Activated T-helper 2 cell treated with anti-CD3 and anti-CD28 coated beads, Interferon-gamma antibody, Interleukin-2, Interleukin-4, amounts not matched to agents 10 μg/mL and 5 μg/mL and 100 μg/mL, durations not matched to agents 14 hours and 24 hours and 36 hours (primary cell): ENCODE measurements at regions of chr10 and their contacts with region 1.

Region 1: GRCh38 chr10:99430451-99431189 is at the start of gene GOT1:
- DNase-seq: peak; percentile 94
- H3K4me3 Mint-ChIP-seq: peak within 1 kb of the TSS; percentile 100
- H3K27ac Mint-ChIP-seq: peak within 1 kb of the TSS; percentile 94
- H3K4me1 Mint-ChIP-seq: peaks cover 25% of the 10 kb centered on the region
- H3K27me3 Mint-ChIP-seq: no peaks in the 10 kb centered on the region
- total RNA-seq, gene GOT1: 30.1 and 35.1 TPM in 2 replicates

Region 2: GRCh38 chr10:98446661-98447221 is 983.9 kb before region 1 on chr10 and contains the start of gene HPS1:
- intact Hi-C with region 1: loop called (anchors 10 kb)
- DNase-seq: peak; percentile 75
- H3K4me3 Mint-ChIP-seq: peak within 1 kb of the TSS; percentile 90
- H3K27ac Mint-ChIP-seq: peak within 1 kb of the TSS; percentile 81
- H3K4me1 Mint-ChIP-seq: peaks cover 26% of the 10 kb centered on the region
- H3K27me3 Mint-ChIP-seq: peaks cover 14% of the 10 kb centered on the region
- total RNA-seq, gene HPS1: 61.2 and 62.0 TPM in 2 replicates

Region 3: GRCh38 chr10:99444383-99445045 is 13.9 kb after region 1 on chr10:
- intact Hi-C with region 1: no loop called
- DNase-seq: no peak
- H3K4me3 Mint-ChIP-seq: no peak overlapping the region
- H3K27ac Mint-ChIP-seq: no peak overlapping the region
- H3K4me1 Mint-ChIP-seq: no peaks in the 10 kb centered on the region
- H3K27me3 Mint-ChIP-seq: peaks cover 13% of the 10 kb centered on the region

Region 4: DNA sequence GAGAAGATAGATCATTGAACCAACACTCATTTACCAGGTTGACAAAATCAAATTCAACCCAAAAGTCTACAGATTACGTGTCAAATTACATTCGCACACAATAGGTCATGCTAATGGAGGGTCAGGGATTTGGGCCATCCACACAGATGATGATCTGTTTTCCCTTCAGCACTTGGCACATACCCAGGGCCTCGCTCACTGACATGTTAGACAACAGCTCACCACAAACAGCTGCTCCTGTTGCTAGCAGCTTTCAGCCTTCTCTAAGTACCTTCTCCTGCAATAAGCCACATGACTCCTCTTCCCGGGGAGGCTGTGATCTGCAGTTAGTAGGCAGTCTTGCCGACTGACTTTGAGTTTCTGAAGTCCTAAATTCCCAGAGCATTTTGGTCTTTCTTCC is 120.5 kb after region 1 on chr10:
- intact Hi-C with region 1: loop called (anchors 10 kb)
- DNase-seq: no peak
- H3K4me3 Mint-ChIP-seq: no peak overlapping the region
- H3K27ac Mint-ChIP-seq: no peak overlapping the region
- H3K4me1 Mint-ChIP-seq: peaks cover 6% of the 10 kb centered on the region
- H3K27me3 Mint-ChIP-seq: peaks cover 62% of the 10 kb centered on the region

Region 5: GRCh38 chr10:99659031-99659867 is 228.6 kb after region 1 on chr10 and contains the start of gene ENTPD7:
- intact Hi-C with region 1: loop called (anchors 1 kb)
- DNase-seq: peak; percentile 90
- H3K4me3 Mint-ChIP-seq: peak within 1 kb of the TSS; percentile 96
- H3K27ac Mint-ChIP-seq: peak within 1 kb of the TSS; percentile 91
- H3K4me1 Mint-ChIP-seq: peaks cover 18% of the 10 kb centered on the region
- H3K27me3 Mint-ChIP-seq: peaks cover 19% of the 10 kb centered on the region
- total RNA-seq, gene ENTPD7: 7.5 and 8.2 TPM in 2 replicates

Region 6: DNA sequence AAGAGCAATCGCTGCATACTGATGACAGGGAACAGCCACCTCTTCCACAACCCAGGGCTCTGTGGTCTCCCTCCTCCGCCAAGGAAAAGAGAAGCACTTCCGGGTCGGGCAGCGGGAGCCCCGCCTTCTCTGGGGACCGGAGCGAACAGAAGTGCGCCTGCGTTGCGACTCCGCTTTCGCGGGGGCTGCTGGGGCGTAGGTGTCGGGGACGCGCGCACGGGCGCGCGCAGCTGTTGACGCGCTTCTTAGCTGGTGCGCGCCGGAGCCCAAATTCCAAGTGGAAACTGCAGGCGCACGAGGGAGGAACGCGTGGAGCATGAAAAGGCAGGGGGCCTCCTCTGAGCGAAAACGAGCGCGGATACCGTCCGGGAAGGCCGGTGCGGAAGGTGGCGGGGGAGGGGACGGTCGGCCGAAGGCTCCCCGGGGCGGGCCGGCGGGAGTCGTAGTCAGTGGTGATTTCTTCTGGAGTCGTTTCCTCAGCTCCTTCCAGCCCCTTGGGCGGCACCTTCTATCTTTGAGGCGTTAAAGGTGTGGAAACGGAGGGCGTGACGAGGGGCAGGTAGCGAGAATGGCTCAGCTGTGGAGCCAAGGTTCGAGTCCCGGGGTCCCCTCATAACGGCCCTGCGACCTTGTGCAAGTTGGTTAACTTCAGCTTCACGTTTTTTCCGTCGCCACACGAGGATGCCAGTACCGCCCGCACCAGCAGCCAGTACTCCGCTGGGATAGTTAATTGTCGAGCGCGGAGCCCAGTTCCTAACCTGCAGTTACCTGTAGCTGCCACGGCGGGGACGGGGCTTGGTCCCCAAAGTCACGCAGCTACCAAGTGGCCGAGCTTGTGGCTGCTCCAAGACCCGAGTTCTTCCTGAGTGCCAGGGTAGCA is 301.7 kb after region 1 on chr10 and contains the starts of genes COX15 and CUTC:
- intact Hi-C with region 1: loop called (anchors 1 kb)
- DNase-seq: peak; percentile 94
- H3K4me3 Mint-ChIP-seq: peak within 1 kb of the TSS; percentile 99
- H3K27ac Mint-ChIP-seq: peak within 1 kb of the TSS; percentile 99
- H3K4me1 Mint-ChIP-seq: peaks cover 24% of the 10 kb centered on the region
- H3K27me3 Mint-ChIP-seq: no peaks in the 10 kb centered on the region
- total RNA-seq, gene COX15: 33.9 and 35.2 TPM in 2 replicates
- total RNA-seq, gene CUTC: 34.4 and 35.5 TPM in 2 replicates

Region 7: GRCh38 chr10:101060036-101060950 is 1629.7 kb after region 1 on chr10:
- intact Hi-C with region 1: loop called (anchors 5 kb)
- DNase-seq: peak; percentile 87
- H3K4me3 Mint-ChIP-seq: peak overlapping the region; percentile 95
- H3K27ac Mint-ChIP-seq: peak overlapping the region; percentile 85
- H3K4me1 Mint-ChIP-seq: peaks cover 27% of the 10 kb centered on the region
- H3K27me3 Mint-ChIP-seq: peaks cover 23% of the 10 kb centered on the region